MCF 10A (cell line): ENCODE measurements at regions of chr10 and their contacts with region 1.

Region 1: DNA sequence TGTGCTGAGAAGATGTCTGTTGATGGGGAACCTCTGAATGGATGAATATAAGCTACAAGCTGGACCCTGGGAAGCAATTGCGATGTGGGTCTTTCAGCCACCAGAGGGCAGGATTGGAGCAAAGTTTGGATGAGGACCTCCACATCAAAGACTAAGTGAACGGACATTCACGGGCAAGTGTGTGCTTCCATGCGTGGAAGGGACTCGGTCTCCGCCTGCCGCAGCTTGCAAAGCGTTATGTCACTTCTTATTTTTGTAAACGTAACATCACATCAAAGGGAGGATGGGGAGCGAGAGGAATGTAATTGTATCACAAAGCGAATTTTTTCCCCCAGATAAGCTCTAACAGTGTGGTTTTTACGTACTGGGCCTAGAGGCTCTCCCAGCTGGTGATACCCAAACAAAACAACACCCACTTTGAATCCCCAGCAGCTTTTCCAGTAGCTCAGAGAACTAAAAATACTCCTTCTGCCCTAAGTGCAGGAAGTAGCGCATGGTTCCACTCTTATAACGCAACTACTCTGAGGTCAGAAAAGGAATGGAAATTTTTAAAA is 65.0 kb downstream of the VWA2 start:
- DNase-seq: peak; percentile 84
- H3K4me3 Mint-ChIP-seq: no peak overlapping the region
- H3K27ac Mint-ChIP-seq: no peak overlapping the region
- H3K4me1 Mint-ChIP-seq: peaks cover 20% of the 10 kb centered on the region
- H3K27me3 Mint-ChIP-seq: no peaks in the 10 kb centered on the region
- CTCF ChIP-seq: peak; percentile 79

Region 2: DNA sequence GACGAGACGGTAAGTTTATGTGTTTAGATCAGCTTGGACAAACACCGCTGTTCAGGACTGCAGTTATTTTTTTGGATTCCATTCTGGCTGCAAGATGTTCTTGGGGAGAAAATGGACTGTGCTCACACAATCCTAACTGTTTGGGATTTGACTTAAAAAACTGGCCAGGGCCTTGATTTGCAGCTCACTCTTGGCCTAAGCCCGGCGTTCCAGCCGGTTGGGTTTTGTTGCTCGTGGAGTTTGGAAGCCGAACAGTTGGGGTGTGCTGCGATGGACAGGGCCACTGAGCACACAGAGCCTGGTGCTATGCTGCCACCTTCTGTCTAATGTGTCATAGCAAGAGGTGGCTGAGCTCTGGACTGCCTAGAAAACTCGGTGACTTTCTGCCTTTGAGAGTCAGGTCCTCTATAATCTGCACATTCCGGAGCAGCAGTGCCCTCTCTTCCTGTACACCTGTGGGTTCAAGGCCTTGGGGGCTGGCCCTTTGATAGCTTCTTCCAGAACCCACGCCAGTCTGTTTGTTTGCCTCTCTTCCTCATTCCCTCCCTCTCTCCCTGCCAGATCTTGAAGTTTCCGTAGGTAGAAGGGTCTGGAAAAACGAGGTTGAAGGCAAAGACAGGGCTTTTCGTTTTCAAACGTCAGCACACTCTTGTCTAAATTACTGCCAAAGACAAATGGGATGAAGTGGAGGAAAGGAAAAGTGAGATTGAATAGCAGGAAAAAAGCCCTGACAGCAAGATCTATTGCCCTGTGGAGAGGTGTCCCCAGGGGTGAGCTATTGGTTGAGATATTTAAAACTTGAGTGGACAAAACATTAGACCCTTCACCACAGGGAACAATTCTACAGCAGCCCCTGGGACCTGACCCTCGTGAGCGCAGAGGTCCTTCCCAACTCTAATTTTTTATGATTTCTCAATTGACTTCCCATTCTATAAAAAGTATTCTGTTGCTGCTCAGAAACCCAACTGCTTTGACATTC is 918.8 kb before region 1 on chr10:
- CTCF ChIA-PET with region 1: no interaction called
- POLR2A ChIA-PET with region 1: no interaction called
- intact Hi-C with region 1: no loop called
- DNase-seq: peak; percentile 83
- H3K4me3 Mint-ChIP-seq: no peak overlapping the region
- H3K27ac Mint-ChIP-seq: no peak overlapping the region
- H3K4me1 Mint-ChIP-seq: peaks cover 20% of the 10 kb centered on the region
- H3K27me3 Mint-ChIP-seq: peaks cover 32% of the 10 kb centered on the region
- CTCF ChIP-seq: peak; percentile 91

Region 3: GRCh38 chr10:114288424-114289095 is 15.5 kb before region 1 on chr10:
- CTCF ChIA-PET with region 1: interaction called, 18 read pairs
- POLR2A ChIA-PET with region 1: no interaction called
- intact Hi-C with region 1: no loop called
- DNase-seq: no peak
- H3K4me3 Mint-ChIP-seq: no peak overlapping the region
- H3K27ac Mint-ChIP-seq: no peak overlapping the region
- H3K4me1 Mint-ChIP-seq: no peaks in the 10 kb centered on the region
- H3K27me3 Mint-ChIP-seq: no peaks in the 10 kb centered on the region
- CTCF ChIP-seq: no peak

Region 4: GRCh38 chr10:114403541-114404161 is 99.6 kb after region 1 on chr10:
- CTCF ChIA-PET with region 1: interaction called, 15 read pairs
- POLR2A ChIA-PET with region 1: interaction called, 3 read pairs
- intact Hi-C with region 1: loop called (anchors 1 kb)
- DNase-seq: no peak
- H3K4me3 Mint-ChIP-seq: peak overlapping the region; percentile 75
- H3K27ac Mint-ChIP-seq: no peak overlapping the region
- H3K4me1 Mint-ChIP-seq: peaks cover 8% of the 10 kb centered on the region
- H3K27me3 Mint-ChIP-seq: no peaks in the 10 kb centered on the region
- CTCF ChIP-seq: peak; percentile 41

Region 5: DNA sequence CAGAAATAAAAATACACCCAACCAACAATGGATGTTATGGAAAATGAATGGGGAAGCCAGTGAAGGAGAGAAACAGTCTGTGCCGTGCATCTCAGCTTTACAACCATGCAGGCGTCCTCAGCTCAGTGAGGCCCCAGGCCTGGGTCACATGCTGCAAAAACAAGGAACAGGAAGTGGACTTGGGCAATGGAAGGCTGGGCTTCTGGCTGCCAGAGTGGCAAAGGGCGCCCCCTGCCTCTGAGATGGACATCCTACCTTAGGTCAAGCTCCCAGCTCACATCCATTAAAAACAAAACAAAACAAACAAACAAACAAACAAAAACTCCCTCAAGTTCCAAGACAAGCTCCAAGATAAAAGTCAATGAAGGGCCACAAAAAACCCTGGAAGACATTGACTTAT is 154.9 kb after region 1 on chr10:
- CTCF ChIA-PET with region 1: interaction called, 23 read pairs
- POLR2A ChIA-PET with region 1: interaction called, 5 read pairs
- intact Hi-C with region 1: loop called (anchors 1 kb)
- DNase-seq: peak; percentile 46
- H3K4me3 Mint-ChIP-seq: no peak overlapping the region
- H3K27ac Mint-ChIP-seq: no peak overlapping the region
- H3K4me1 Mint-ChIP-seq: no peaks in the 10 kb centered on the region
- H3K27me3 Mint-ChIP-seq: no peaks in the 10 kb centered on the region
- CTCF ChIP-seq: peak; percentile 41

Region 6: DNA sequence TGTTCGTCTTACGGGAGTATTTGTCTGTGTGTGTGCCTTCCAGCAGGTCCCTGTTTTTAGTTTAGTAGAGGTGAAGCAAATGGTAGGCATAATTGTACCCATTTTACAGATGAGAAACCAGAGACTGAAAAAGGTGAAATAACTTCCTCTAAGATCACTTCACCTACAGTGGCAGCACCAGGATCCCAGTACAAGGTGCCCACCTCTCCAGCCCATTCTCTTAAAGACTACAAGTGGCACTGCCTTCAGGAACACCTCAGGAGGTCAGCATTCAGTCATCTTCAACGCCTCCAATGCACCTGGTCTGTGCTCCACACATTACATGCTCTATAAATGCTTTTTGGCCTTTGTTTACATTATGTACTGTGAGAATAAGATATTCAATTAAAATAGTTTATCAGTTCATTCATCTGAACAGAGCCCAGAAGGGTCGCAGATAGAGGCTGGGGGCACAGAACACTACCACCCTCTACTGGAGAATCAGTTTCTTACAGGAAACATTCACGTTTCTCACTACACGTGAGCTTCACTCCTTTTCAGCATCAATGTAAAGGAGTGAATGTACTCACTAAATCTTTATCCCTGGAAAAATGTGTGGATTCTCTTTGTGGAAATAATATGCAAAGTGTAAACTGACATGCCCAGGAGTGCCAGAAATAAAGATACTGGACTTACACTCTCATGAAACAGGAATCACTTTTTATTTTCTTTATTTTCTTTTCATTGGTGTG is 399.4 kb after region 1 on chr10:
- CTCF ChIA-PET with region 1: no interaction called
- POLR2A ChIA-PET with region 1: no interaction called
- intact Hi-C with region 1: loop called (anchors 10 kb)
- DNase-seq: peak; percentile 48
- H3K4me3 Mint-ChIP-seq: no peak overlapping the region
- H3K27ac Mint-ChIP-seq: no peak overlapping the region
- H3K4me1 Mint-ChIP-seq: peaks cover 19% of the 10 kb centered on the region
- H3K27me3 Mint-ChIP-seq: no peaks in the 10 kb centered on the region
- CTCF ChIP-seq: peak; percentile 81